Activated CD4-positive, alpha-beta T cell treated with anti-CD3 and anti-CD28 coated beads for 36 hours (primary cell): ENCODE measurements at regions of chr12 and their contacts with region 1.

Region 1: DNA sequence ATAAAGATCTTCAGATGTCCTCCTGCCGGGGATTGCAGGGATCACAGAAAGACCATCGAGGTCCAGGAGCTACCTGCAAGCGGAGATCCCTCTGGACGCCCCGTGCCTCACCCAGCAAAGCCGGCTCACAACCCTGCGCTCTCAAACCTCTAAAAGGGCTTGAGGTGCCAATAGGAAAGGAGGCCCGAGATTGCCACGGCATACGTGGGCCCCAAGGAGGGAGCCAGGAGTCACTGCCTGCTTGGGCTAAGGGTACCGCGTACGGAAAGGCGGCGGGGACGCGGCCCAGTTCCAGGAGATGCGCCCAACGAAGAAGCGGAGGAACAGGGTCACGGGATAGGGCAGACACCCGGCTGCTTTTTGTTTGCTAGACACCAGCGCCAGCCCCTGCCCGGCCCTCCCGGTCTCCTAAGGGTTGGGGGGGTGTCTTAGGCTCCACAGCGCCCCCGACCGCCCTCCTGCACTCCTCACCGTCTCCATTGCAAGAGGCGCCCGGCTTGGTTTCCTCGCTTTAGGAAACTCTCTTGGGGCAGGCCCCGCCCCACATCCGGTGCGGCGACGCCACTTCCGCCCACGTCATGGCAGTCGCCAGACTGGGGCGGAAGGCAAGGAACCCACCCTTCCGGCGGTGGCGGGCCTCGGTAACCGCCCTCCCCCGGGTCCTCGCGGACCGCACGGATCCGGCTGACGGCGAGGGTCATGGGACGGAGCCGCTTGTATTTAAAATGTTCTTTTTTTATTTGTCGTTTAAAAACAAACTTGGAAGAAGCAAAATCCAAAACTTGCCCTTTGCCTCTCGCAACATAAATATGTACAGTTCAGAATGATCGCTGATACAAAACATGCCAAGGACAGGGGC is at the start of gene PRKAG1:
- DNase-seq: peak; percentile 97
- ATAC-seq: peak; percentile 87
- H3K4me3 Mint-ChIP-seq: peak within 1 kb of the TSS; percentile 81
- H3K27ac Mint-ChIP-seq: peak within 1 kb of the TSS; percentile 97
- H3K4me1 Mint-ChIP-seq: peaks cover 34% of the 10 kb centered on the region
- H3K27me3 Mint-ChIP-seq: no peaks in the 10 kb centered on the region
- total RNA-seq, gene PRKAG1: 54.5 to 62.6 TPM

Region 2: DNA sequence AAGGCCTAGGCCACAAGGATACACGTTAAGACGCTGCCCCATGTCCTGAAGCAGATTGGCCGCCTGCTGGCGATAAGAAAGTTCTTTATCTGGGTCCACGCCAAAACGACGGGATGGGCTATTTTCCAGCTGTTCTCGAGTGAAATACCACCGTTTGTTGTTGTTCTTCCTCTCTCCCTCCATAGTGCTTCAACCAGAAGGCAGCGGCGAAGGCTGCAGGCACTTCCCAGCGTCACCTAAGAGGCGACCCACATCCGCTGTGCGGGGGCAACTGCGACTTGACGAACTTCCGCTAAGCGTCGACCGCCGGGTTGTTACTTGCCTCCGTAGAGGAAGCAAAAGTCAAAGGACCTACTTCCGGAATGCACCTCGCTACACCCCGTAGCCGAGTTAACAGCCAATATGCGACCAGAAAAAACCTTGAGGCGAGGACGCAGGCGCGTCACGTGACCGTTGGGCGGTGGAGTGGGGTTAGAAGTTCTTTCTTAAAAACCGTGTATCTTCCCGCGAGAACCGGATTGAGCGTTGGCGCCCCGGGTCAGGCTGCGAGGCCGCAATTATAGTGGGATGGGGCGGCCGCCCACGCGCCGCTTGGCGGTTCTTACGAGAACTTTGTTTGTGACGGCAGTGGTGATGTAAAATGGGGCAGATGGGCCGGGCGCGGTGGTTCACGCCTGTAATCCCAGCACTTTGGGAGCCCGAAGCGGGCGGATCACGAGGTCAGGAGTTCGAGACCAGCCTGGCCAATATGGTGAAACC is 301.8 kb before region 1 on chr12 and contains the start of gene CCNT1:
- CTCF ChIA-PET with region 1: no interaction called
- POLR2A ChIA-PET with region 1: no interaction called
- intact Hi-C with region 1: loop called in 1 of 2 experiments (anchors 1 kb)
- DNase-seq: peak; percentile 100
- ATAC-seq: peak; percentile 95
- H3K4me3 Mint-ChIP-seq: peak within 1 kb of the TSS; percentile 99
- H3K27ac Mint-ChIP-seq: peak within 1 kb of the TSS; percentile 99
- H3K4me1 Mint-ChIP-seq: peaks cover 37% of the 10 kb centered on the region
- H3K27me3 Mint-ChIP-seq: no peaks in the 10 kb centered on the region
- total RNA-seq, gene CCNT1: 82.2 to 85.1 TPM

Region 3: DNA sequence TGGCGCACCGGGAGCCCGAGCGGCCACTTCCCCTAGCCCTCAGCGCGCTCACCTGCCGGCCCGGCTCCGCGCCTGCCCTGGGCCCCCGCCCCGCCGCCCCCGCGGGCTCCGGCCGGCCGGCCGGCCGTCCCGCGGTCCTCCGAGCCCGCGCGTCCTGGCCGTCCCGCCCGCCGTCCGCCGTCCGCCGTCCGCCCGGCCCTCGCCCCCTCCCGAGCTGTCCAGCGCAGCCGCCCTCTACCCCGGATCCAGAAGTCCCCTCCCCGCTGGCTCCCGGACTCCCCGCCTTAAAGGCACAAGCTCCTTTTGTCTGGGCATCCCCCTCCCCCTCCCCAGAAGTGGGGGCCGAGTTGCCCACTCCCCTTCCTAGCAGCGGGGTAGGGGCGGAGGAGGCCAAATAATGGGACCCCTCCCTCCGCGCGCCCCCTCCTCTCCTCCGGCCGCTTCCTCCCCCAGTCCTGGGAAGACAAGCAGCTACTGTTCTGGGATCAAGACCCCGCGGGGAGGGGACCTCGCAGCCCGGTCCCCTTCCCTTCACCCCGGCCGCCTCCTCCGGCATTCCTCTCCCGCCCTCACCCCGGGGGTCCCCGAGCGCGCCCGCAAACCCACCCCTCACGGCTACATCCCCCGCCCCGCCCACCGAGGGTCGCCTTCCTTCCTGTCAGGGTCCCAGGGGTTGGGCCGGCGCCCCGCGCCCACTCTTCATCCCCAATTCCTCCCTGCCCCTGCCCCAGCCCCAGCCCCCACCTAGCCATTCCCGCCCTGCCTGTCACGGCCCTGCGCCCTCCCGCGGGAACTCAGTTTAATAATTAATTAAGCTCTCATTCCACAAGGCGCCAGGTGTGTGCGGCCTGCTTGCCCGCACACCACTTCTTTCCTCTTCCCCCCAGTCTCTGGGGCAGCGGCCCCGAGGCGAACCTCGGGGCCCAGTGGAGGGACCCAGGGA is 229.4 kb before region 1 on chr12 and contains the start of gene ADCY6:
- CTCF ChIA-PET with region 1: no interaction called
- POLR2A ChIA-PET with region 1: no interaction called
- intact Hi-C with region 1: no loop called
- DNase-seq: peak; percentile 33
- ATAC-seq: no peak
- H3K4me3 Mint-ChIP-seq: peak within 1 kb of the TSS; percentile 46
- H3K27ac Mint-ChIP-seq: no peak within 1 kb of the TSS
- H3K4me1 Mint-ChIP-seq: no peaks in the 10 kb centered on the region
- H3K27me3 Mint-ChIP-seq: peaks cover 30% of the 10 kb centered on the region
- total RNA-seq, gene ADCY6: 0.05 to 0.09 TPM

Region 4: DNA sequence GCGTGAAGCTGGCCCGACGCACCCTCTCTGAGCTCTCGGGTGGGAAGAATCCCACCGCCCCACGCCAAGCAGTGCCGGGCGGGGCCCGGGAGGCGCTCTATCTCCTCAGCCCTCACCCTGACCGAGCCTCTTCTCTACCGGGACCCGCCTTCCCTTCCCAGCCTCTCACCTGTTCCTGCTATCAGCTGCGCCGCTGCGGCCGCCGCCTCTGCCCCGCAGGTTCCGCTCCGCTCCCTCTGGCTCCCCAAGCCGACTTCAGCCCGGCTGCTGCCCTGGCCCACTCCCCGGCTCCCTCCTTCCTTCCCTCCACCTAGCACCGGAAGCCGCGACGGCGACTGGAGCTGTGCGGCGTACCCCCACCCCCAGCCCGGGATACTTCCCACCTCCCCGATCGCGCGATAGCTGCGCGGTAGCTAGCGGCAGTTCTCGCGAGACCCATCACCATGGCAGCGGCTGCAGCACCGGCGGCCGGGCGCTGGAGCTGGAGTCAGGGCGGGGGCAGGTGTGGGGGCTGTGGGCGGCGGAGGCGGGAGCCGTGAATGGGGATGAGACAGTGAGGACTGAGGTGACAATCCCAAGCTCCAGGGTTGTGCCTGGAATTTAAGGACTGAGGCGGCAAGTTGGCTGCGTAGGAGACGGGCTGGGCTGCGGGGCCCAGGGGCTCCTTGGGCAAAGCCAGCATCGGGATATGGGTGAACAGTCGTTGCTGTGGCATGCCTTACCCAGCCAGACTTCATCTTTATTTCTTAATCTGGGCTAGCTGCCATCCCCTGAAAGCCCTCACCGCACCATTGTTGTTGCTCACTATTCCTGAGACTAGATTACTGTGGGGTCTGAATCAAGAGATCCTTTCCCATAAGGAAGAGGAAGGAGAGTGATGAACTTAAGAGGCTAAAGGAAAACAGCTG is 61.1 kb before region 1 on chr12 and contains the start of gene ARF3:
- CTCF ChIA-PET with region 1: interaction called, 4 read pairs
- POLR2A ChIA-PET with region 1: interaction called, 5 read pairs
- intact Hi-C with region 1: loop called in 1 of 2 experiments (anchors 1 kb)
- DNase-seq: peak; percentile 97
- ATAC-seq: peak; percentile 99
- H3K4me3 Mint-ChIP-seq: peak within 1 kb of the TSS; percentile 92
- H3K27ac Mint-ChIP-seq: peak within 1 kb of the TSS; percentile 74
- H3K4me1 Mint-ChIP-seq: peaks cover 23% of the 10 kb centered on the region
- H3K27me3 Mint-ChIP-seq: no peaks in the 10 kb centered on the region
- total RNA-seq, gene ARF3: 84.7 to 96.1 TPM

Region 5: GRCh38 chr12:49043856-49044258 is 25.4 kb after region 1 on chr12:
- CTCF ChIA-PET with region 1: interaction called, 10 read pairs
- POLR2A ChIA-PET with region 1: no interaction called
- intact Hi-C with region 1: no loop called
- DNase-seq: peak; percentile 91
- ATAC-seq: peak; percentile 91
- H3K4me3 Mint-ChIP-seq: no peak overlapping the region
- H3K27ac Mint-ChIP-seq: no peak overlapping the region
- H3K4me1 Mint-ChIP-seq: peaks cover 2% of the 10 kb centered on the region
- H3K27me3 Mint-ChIP-seq: no peaks in the 10 kb centered on the region

Region 6: GRCh38 chr12:49130151-49131050 is 111.9 kb after region 1 on chr12:
- CTCF ChIA-PET with region 1: no interaction called
- POLR2A ChIA-PET with region 1: interaction called, 4 read pairs
- intact Hi-C with region 1: loop called in 1 of 2 experiments (anchors 1 kb)
- DNase-seq: peak; percentile 96
- ATAC-seq: peak; percentile 58
- H3K4me3 Mint-ChIP-seq: peak overlapping the region; percentile 99
- H3K27ac Mint-ChIP-seq: peak overlapping the region; percentile 97
- H3K4me1 Mint-ChIP-seq: peaks cover 44% of the 10 kb centered on the region
- H3K27me3 Mint-ChIP-seq: no peaks in the 10 kb centered on the region

Region 7: GRCh38 chr12:49322708-49323523 is 304.4 kb after region 1 on chr12 and contains the start of gene TROAP:
- CTCF ChIA-PET with region 1: no interaction called
- POLR2A ChIA-PET with region 1: no interaction called
- intact Hi-C with region 1: loop called in 1 of 2 experiments (anchors 1 kb)
- DNase-seq: peak; percentile 99
- ATAC-seq: peak; percentile 96
- H3K4me3 Mint-ChIP-seq: peak within 1 kb of the TSS; percentile 95
- H3K27ac Mint-ChIP-seq: peak within 1 kb of the TSS; percentile 95
- H3K4me1 Mint-ChIP-seq: peaks cover 10% of the 10 kb centered on the region
- H3K27me3 Mint-ChIP-seq: no peaks in the 10 kb centered on the region
- total RNA-seq, gene TROAP: 64.5 to 84.3 TPM